Breast epithelium (tissue), 4 donors: ENCODE measurements at regions of chr1 and their contacts with region 1.

Region 1: DNA sequence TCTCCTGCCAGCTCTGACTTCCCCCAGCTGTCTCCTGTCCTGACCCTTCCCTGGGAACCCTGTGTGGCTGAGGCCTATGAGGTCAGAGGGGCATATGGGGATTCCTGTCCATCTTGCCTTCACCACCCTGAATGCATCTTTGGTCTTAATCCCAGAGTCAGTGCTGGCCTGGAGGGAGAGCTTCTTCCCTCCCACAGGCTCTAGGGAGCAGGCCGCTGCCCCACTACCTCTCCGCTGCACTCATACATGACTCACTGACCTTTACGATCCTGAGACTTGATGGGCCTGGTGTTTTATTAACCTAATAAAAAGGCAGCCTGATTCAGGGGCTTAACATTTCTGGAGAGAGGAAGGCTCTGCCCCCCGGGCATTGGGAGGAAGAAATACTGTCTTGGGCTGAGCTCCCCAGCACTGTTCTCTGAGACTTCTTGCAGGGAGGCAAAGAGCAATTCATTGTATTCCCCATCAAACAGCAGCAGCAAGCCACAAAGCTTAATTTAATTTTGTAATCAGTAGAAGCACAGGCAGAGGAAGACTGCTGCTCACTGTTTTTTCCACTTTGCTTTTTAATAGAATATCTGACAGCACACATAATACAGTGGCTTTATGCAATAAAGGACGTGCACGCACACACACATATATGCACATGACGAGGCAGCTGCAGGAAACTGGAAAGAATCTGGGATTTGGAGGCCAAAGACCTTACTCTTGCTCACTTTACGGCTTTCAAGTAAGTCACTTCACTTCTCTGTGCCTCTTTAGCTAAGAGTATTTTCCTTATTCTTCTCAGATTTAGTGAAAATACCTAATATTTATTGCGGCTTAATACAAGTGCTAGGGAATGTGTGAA is 89.2 kb upstream of the GRIK3 start:
- DNase-seq: no peak
- H3K4me3 ChIP-seq: no peak overlapping the region
- H3K27ac ChIP-seq: no peak overlapping the region
- H3K4me1 ChIP-seq: no peaks in the 10 kb centered on the region
- H3K27me3 ChIP-seq: no peaks in the 10 kb centered on the region
- CTCF ChIP-seq: no peak
- POLR2A ChIP-seq: no peak

Region 2: DNA sequence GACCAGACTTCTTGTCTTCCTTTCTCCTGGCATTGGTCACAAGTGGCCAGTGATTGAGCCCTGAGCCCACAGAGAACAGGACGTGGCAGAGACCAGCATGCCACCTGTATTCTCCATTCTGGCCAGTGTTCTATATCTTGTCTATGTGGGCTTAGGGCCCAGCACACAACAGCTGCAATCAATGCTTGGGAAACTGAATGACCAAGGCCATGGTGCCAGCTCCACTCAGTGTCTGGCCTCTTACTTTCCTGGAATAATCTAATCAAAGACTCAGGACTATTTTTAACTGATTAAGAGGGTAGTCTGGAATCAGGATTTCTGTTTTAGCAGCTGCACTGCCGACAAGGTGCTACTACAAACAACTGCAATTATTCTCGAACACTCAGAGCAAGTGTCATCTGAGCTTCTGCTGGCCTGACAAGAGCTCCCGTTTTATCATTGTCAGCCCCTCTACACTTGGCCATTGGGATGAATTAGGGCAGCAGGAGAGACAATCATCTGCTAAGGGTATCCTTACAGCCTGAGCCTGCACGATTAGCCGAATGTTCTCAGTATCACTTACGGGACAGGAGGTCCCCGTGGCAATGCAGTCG is 14.8 kb before region 1 on chr1:
- intact Hi-C with region 1: no loop called
- DNase-seq: no peak
- H3K4me3 ChIP-seq: no peak overlapping the region
- H3K27ac ChIP-seq: no peak overlapping the region
- H3K4me1 ChIP-seq: no peaks in the 10 kb centered on the region
- H3K27me3 ChIP-seq: peaks cover 0 to 8% of the 10 kb centered on the region in 2 donors
- CTCF ChIP-seq: no peak
- POLR2A ChIP-seq: no peak

Region 3: GRCh38 chr1:37676281-37677243 is 553.1 kb after region 1 on chr1:
- intact Hi-C with region 1: loop called (anchors 5 kb)
- DNase-seq: no peak
- H3K4me3 ChIP-seq: no peak overlapping the region
- H3K27ac ChIP-seq: peak overlapping the region; percentile 16 to 58
- H3K4me1 ChIP-seq: no peaks in the 10 kb centered on the region
- H3K27me3 ChIP-seq: no peaks in the 10 kb centered on the region
- CTCF ChIP-seq: no peak
- POLR2A ChIP-seq: no peak